GM18951 (cell line): ENCODE measurements at regions of chr4 and their contacts with region 1.

Region 1: GRCh38 chr4:112031712-112032328 is 113.4 kb upstream of the FAM241A start:
- POLR2A ChIP-seq: no peak

Region 2: DNA sequence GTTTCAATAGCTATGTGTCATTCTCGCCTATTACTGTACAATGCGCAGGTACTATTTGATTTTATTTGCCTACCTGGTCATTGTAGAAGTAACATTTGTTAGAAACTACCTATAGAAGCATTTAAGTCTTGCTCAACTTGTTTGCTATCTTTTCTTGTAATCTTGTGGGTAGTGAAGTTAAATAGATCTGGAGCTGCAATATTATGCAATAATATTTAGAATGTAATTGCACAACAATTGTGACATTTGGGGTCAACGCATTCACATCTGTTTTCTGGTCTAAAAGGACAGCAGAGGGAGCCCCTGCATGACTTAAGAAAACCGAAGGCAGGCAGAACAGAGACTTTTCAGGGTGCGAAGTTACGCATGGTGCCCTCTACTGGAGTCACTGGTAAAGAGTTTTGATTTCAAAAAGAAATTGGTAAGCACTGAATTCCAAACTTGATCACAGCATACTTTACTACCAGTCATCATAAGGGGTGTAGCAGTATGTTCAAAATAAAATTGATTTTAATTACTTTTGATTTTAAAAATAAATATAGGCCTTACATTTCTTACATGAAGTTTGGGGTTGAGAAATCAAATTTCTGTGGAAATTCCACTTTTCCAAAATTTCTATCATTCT is 389.8 kb before region 1 on chr4:
- in situ Hi-C with region 1: loop called (anchors 10 kb)
- POLR2A ChIP-seq: no peak

Region 3: GRCh38 chr4:111707491-111707890 is 324.3 kb before region 1 on chr4:
- in situ Hi-C with region 1: no loop called
- POLR2A ChIP-seq: no peak

Region 4: GRCh38 chr4:111943795-111944203 is 88.0 kb before region 1 on chr4:
- in situ Hi-C with region 1: loop called (anchors 10 kb)
- POLR2A ChIP-seq: no peak